CD8-positive, alpha-beta T cell (primary cell): ENCODE measurements at regions of chr2 and their contacts with region 1.

Region 1: DNA sequence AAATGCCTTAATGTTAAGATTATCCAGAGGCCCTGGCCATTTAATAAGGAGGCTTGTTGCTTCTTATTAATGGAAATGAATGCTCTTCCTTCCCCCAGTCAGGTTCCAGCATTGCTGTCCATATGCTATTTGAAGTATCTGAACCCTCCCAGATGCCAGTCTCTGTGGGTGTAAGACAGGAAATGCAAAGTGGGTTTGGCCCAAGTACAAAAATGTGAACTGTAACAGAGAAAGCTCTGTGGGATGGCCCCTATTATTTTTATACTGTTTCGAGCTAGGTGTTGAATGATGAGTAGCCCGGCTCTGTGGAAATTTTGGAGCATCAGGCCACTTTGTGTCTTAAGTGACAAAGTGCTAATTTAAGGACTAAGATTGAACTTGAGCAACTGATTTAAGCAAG is 141.0 kb downstream of the UXS1 start:
- DNase-seq: peak in 2 of 9 experiments; percentile 48 to 66
- ATAC-seq: peak; percentile 28
- H3K4me3 ChIP-seq: no peak overlapping the region
- H3K4me3 Mint-ChIP-seq: peak overlapping the region; percentile 62
- H3K27ac ChIP-seq: no peak overlapping the region
- H3K27ac Mint-ChIP-seq: peak overlapping the region; percentile 66
- H3K4me1 ChIP-seq: peaks cover 59% of the 10 kb centered on the region
- H3K4me1 Mint-ChIP-seq: peaks cover 75% of the 10 kb centered on the region
- H3K27me3 ChIP-seq: no peaks in the 10 kb centered on the region
- H3K27me3 Mint-ChIP-seq: no peaks in the 10 kb centered on the region
- CTCF ChIP-seq: no peak

Region 2: GRCh38 chr2:105929516-105929915 is 123.6 kb before region 1 on chr2:
- CTCF ChIA-PET with region 1: interaction called, 3 read pairs
- POLR2A ChIA-PET with region 1: interaction called, 6 read pairs
- intact Hi-C with region 1: loop called in 1 of 2 experiments (anchors 2 kb)
- DNase-seq: peak in 8 of 9 experiments; percentile 26 to 81 (median 56)
- ATAC-seq: peak; percentile 79
- H3K4me3 ChIP-seq: no peak overlapping the region
- H3K4me3 Mint-ChIP-seq: peak overlapping the region; percentile 59
- H3K27ac ChIP-seq: peak overlapping the region; percentile 3 to 49
- H3K27ac Mint-ChIP-seq: peak overlapping the region; percentile 95
- H3K4me1 ChIP-seq: peaks cover 90% of the 10 kb centered on the region
- H3K4me1 Mint-ChIP-seq: peaks cover 88% of the 10 kb centered on the region
- H3K27me3 ChIP-seq: no peaks in the 10 kb centered on the region
- H3K27me3 Mint-ChIP-seq: no peaks in the 10 kb centered on the region
- CTCF ChIP-seq: no peak

Region 3: DNA sequence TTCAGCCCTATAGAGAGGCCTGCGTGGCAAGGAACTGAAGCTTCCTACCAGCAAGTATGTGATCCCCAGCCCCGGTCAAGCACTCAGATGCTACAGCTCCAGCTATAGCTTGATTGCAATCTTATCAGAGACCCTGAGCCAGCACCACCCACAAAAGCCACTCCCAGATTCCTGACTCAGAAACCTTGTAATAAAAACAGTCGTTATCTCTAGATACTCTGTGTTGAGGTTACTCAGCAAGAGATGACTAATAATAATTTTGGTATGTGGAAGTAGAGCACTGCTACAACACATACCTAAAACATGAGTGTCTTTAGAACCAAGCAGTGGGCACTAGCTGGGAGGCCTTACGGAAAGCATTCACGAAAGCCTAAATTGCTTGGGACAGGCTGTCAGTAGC is 75.9 kb before region 1 on chr2:
- CTCF ChIA-PET with region 1: no interaction called
- POLR2A ChIA-PET with region 1: no interaction called
- intact Hi-C with region 1: loop called in 1 of 2 experiments (anchors 5 kb)
- DNase-seq: no peak
- ATAC-seq: no peak
- H3K4me3 ChIP-seq: no peak overlapping the region
- H3K4me3 Mint-ChIP-seq: no peak overlapping the region
- H3K27ac ChIP-seq: no peak overlapping the region
- H3K27ac Mint-ChIP-seq: peak overlapping the region; percentile 82
- H3K4me1 ChIP-seq: peaks cover 58% of the 10 kb centered on the region
- H3K4me1 Mint-ChIP-seq: peaks cover 52% of the 10 kb centered on the region
- H3K27me3 ChIP-seq: no peaks in the 10 kb centered on the region
- H3K27me3 Mint-ChIP-seq: no peaks in the 10 kb centered on the region
- CTCF ChIP-seq: no peak

Region 4: GRCh38 chr2:106076941-106077340 is 23.8 kb after region 1 on chr2:
- CTCF ChIA-PET with region 1: no interaction called
- POLR2A ChIA-PET with region 1: no interaction called
- intact Hi-C with region 1: loop called in 1 of 2 experiments (anchors 1 kb)
- DNase-seq: peak in 1 of 9 experiments; percentile 36
- ATAC-seq: no peak
- H3K4me3 ChIP-seq: no peak overlapping the region
- H3K4me3 Mint-ChIP-seq: no peak overlapping the region
- H3K27ac ChIP-seq: no peak overlapping the region
- H3K27ac Mint-ChIP-seq: peak overlapping the region; percentile 1
- H3K4me1 ChIP-seq: peaks cover 28% of the 10 kb centered on the region
- H3K4me1 Mint-ChIP-seq: peaks cover 45% of the 10 kb centered on the region
- H3K27me3 ChIP-seq: no peaks in the 10 kb centered on the region
- H3K27me3 Mint-ChIP-seq: no peaks in the 10 kb centered on the region
- CTCF ChIP-seq: no peak

Region 5: GRCh38 chr2:106582148-106583143 is 529.3 kb after region 1 on chr2:
- CTCF ChIA-PET with region 1: no interaction called
- POLR2A ChIA-PET with region 1: no interaction called
- intact Hi-C with region 1: no loop called
- DNase-seq: peak; percentile 26 to 74 (median 60)
- ATAC-seq: peak; percentile 83
- H3K4me3 ChIP-seq: peak overlapping the region; percentile 54 to 57
- H3K4me3 Mint-ChIP-seq: peak overlapping the region; percentile 91
- H3K27ac ChIP-seq: no peak overlapping the region
- H3K27ac Mint-ChIP-seq: no peak overlapping the region
- H3K4me1 ChIP-seq: peaks cover 5% of the 10 kb centered on the region
- H3K4me1 Mint-ChIP-seq: peaks cover 15% of the 10 kb centered on the region
- H3K27me3 ChIP-seq: peaks cover 0 to 4% of the 10 kb centered on the region in 2 experiments
- H3K27me3 Mint-ChIP-seq: peaks cover 44% of the 10 kb centered on the region
- CTCF ChIP-seq: peak; percentile 93